ENCODE measurements at regions of chr3 and their contacts with region 1.

Region 1: DNA sequence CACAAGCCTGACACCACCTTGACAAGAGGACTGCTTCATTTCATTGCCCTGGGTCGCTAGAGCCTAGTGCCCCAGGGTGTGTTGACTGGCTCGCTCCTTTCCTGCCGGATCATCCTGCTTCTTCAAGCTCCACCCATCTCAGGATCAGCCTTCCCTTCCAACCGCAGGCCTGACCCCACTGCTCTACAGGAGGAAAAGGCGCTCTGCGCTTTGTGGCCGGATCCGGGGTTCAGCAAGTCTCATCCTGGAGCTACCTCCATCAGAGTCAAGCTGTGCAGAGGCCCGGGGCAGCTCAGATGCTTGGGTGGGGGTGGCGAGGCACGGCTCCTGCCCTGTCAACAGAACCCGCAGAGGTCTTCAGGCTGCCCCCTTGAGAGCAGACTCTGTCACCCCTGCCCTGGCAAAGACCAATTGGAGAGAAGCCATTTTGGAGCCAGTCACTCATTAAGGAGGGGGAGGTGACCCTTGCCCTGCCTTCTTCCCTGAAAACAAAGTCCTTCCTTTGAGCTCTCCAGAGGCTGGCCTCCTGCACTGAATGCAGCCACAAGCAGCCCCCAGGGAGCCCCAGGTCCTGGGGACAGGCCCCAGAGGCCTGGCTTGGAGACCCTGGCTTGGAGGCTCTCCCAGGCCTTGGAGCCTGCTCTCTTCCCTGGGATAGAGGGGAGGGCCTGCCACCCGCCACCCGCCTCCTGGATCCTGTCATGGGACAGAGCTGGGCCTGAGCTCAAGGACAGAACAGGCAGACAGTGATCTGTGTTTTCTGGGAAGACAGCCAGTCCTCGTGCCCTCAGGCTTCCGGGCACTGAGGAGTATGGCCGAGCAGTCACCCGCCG is 80.3 kb downstream of the CPN2 start:
- DNase-seq: peak; percentile 94

Region 2: GRCh38 chr3:193174140-193174539 is 1096.7 kb before region 1 on chr3:
- intact Hi-C with region 1: no loop called
- DNase-seq: no peak

Region 3: GRCh38 chr3:194323785-194324735 is 53.2 kb after region 1 on chr3:
- intact Hi-C with region 1: loop called (anchors 1 kb)
- DNase-seq: peak; percentile 94

Measured in cardiac septum (tissue), 1 donor.